ENCODE measurements at regions of chr16 and their contacts with region 1.

Region 1: GRCh38 chr16:30698139-30698815 is 694 bp upstream of the SRCAP start:
- H3K4me3 Mint-ChIP-seq: peak overlapping the region; percentile 79
- H3K27ac Mint-ChIP-seq: peak overlapping the region; percentile 100
- H3K4me1 Mint-ChIP-seq: peaks cover 44% of the 10 kb centered on the region
- H3K27me3 Mint-ChIP-seq: no peaks in the 10 kb centered on the region

Region 2: GRCh38 chr16:30637942-30638341 is 60.3 kb before region 1 on chr16:
- intact Hi-C with region 1: loop called (anchors 10 kb)
- H3K4me3 Mint-ChIP-seq: no peak overlapping the region
- H3K27ac Mint-ChIP-seq: peak overlapping the region; percentile 20
- H3K4me1 Mint-ChIP-seq: peaks cover 13% of the 10 kb centered on the region
- H3K27me3 Mint-ChIP-seq: peaks cover 2% of the 10 kb centered on the region

Region 3: GRCh38 chr16:30650369-30651123 is 47.7 kb before region 1 on chr16 and contains the start of gene PRR14:
- intact Hi-C with region 1: loop called (anchors 2 kb)
- H3K4me3 Mint-ChIP-seq: peak within 1 kb of the TSS; percentile 90
- H3K27ac Mint-ChIP-seq: peak within 1 kb of the TSS; percentile 99
- H3K4me1 Mint-ChIP-seq: peaks cover 43% of the 10 kb centered on the region
- H3K27me3 Mint-ChIP-seq: no peaks in the 10 kb centered on the region

Region 4: GRCh38 chr16:30657866-30658730 is 40.2 kb before region 1 on chr16 and contains the start of gene FBRS:
- intact Hi-C with region 1: loop called (anchors 1 kb)
- H3K4me3 Mint-ChIP-seq: peak within 1 kb of the TSS; percentile 98
- H3K27ac Mint-ChIP-seq: peak within 1 kb of the TSS; percentile 100
- H3K4me1 Mint-ChIP-seq: peaks cover 66% of the 10 kb centered on the region
- H3K27me3 Mint-ChIP-seq: no peaks in the 10 kb centered on the region

Region 5: GRCh38 chr16:30715737-30716445 is 17.6 kb after region 1 on chr16:
- intact Hi-C with region 1: loop called (anchors 1 kb)
- H3K4me3 Mint-ChIP-seq: peak overlapping the region; percentile 45
- H3K27ac Mint-ChIP-seq: peak overlapping the region; percentile 90
- H3K4me1 Mint-ChIP-seq: peaks cover 66% of the 10 kb centered on the region
- H3K27me3 Mint-ChIP-seq: no peaks in the 10 kb centered on the region

Region 6: GRCh38 chr16:30761928-30762810 is 63.9 kb after region 1 on chr16 and contains the starts of genes CFAP119 and RNF40:
- intact Hi-C with region 1: loop called (anchors 1 kb)
- H3K4me3 Mint-ChIP-seq: peak within 1 kb of the TSS; percentile 90
- H3K27ac Mint-ChIP-seq: peak within 1 kb of the TSS; percentile 95
- H3K4me1 Mint-ChIP-seq: peaks cover 59% of the 10 kb centered on the region
- H3K27me3 Mint-ChIP-seq: no peaks in the 10 kb centered on the region

Region 7: GRCh38 chr16:30910427-30911029 is 212.3 kb after region 1 on chr16:
- intact Hi-C with region 1: no loop called
- H3K4me3 Mint-ChIP-seq: no peak overlapping the region
- H3K27ac Mint-ChIP-seq: no peak overlapping the region
- H3K4me1 Mint-ChIP-seq: no peaks in the 10 kb centered on the region
- H3K27me3 Mint-ChIP-seq: no peaks in the 10 kb centered on the region